ENCODE measurements at regions of chr1 and their contacts with region 1.

Region 1: GRCh38 chr1:157325220-157325619 is 187.0 kb upstream of the ETV3 start:
- DNase-seq: peak; percentile 55 to 90 (median 64)
- ATAC-seq: peak; percentile 89
- H3K4me3 ChIP-seq: no peak overlapping the region
- H3K27ac ChIP-seq: peak overlapping the region; percentile 48; the same call in 2 of the 3 replicates
- H3K4me1 ChIP-seq: peaks cover 7 to 18% of the 10 kb centered on the region in 2 experiments; a peak in 4 of 5 replicates
- H3K27me3 ChIP-seq: no peaks in the 10 kb centered on the region
- CTCF ChIP-seq: no peak
- EP300 ChIP-seq: peak; percentile 96
- POLR2A ChIP-seq: no peak
- RAD21 ChIP-seq: no peak; a peak in 1 of 4 replicates

Region 2: GRCh38 chr1:157357111-157357510 is 31.9 kb after region 1 on chr1:
- CTCF ChIA-PET with region 1: no interaction called
- POLR2A ChIA-PET with region 1: interaction called, 3 read pairs
- in situ Hi-C with region 1: no loop called
- intact Hi-C with region 1: loop called (anchors 1 kb)
- DNase-seq: peak in 2 of 4 experiments; percentile 38 to 70
- ATAC-seq: peak; percentile 78
- H3K4me3 ChIP-seq: no peak overlapping the region
- H3K27ac ChIP-seq: peak overlapping the region; percentile 14; the same call in 2 of the 3 replicates
- H3K4me1 ChIP-seq: peaks cover 6 to 20% of the 10 kb centered on the region in 2 experiments; a peak in 3 of 5 replicates
- H3K27me3 ChIP-seq: no peaks in the 10 kb centered on the region
- CTCF ChIP-seq: no peak
- EP300 ChIP-seq: no peak
- POLR2A ChIP-seq: no peak
- RAD21 ChIP-seq: no peak

Region 3: GRCh38 chr1:157403203-157403602 is 78.0 kb after region 1 on chr1:
- CTCF ChIA-PET with region 1: no interaction called
- POLR2A ChIA-PET with region 1: no interaction called
- in situ Hi-C with region 1: no loop called
- intact Hi-C with region 1: no loop called
- DNase-seq: peak in 1 of 4 experiments; percentile 24
- ATAC-seq: peak; percentile 46
- H3K4me3 ChIP-seq: no peak overlapping the region
- H3K27ac ChIP-seq: peak overlapping the region; percentile 58; the same call in 1 of the 3 replicates
- H3K4me1 ChIP-seq: peaks cover 10 to 32% of the 10 kb centered on the region in 2 experiments
- H3K27me3 ChIP-seq: no peaks in the 10 kb centered on the region
- CTCF ChIP-seq: no peak
- EP300 ChIP-seq: no peak
- POLR2A ChIP-seq: no peak
- RAD21 ChIP-seq: no peak

Region 4: DNA sequence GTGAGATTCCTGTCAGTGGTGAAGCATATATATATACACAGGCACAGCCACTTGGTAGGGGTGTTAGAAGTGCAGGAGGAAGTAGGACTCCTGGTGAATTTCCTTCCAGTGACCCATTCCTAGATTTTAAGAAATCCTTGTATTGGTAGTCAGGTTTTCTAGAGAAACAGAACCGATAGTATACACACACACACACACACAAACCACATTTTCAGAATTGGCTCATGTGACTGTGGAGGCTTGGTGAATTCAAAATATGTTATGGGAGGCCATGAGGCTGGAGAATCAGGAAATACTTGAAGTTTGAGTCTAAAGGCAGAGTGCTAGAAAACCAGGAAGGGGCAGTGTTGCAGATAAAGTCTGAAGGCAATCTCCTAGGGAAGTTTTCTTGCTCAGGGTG is 112.9 kb after region 1 on chr1:
- CTCF ChIA-PET with region 1: no interaction called
- POLR2A ChIA-PET with region 1: no interaction called
- in situ Hi-C with region 1: no loop called
- intact Hi-C with region 1: no loop called
- DNase-seq: no peak
- ATAC-seq: no peak
- H3K4me3 ChIP-seq: no peak overlapping the region
- H3K27ac ChIP-seq: no peak overlapping the region
- H3K4me1 ChIP-seq: no peaks in the 10 kb centered on the region
- H3K27me3 ChIP-seq: peaks cover 8 to 25% of the 10 kb centered on the region in 2 experiments
- CTCF ChIP-seq: no peak
- EP300 ChIP-seq: no peak
- POLR2A ChIP-seq: no peak
- RAD21 ChIP-seq: no peak

Measured in K562 (cell line).